Endothelial cell of umbilical vein (primary cell): ENCODE measurements at regions of chr1 and their contacts with region 1.

Region 1: GRCh38 chr1:150813058-150813707 is 5.1 kb upstream of the CTSK start:
- DNase-seq: peak; percentile 83
- H3K4me3 ChIP-seq: no peak overlapping the region
- H3K27ac ChIP-seq: no peak overlapping the region
- H3K4me1 ChIP-seq: peaks cover 2% of the 10 kb centered on the region
- H3K27me3 ChIP-seq: no peaks in the 10 kb centered on the region
- CTCF ChIP-seq: peak; percentile 76 to 81
- POLR2A ChIP-seq: no peak

Region 2: GRCh38 chr1:150621497-150622302 is 191.5 kb before region 1 on chr1:
- CTCF ChIA-PET with region 1: interaction called, 45 read pairs
- POLR2A ChIA-PET with region 1: no interaction called
- dilution Hi-C with region 1: no loop called
- intact Hi-C with region 1: loop called (anchors 1 kb)
- DNase-seq: peak; percentile 73
- H3K4me3 ChIP-seq: no peak overlapping the region
- H3K27ac ChIP-seq: peak overlapping the region; percentile 27
- H3K4me1 ChIP-seq: peaks cover 30% of the 10 kb centered on the region
- H3K27me3 ChIP-seq: no peaks in the 10 kb centered on the region
- CTCF ChIP-seq: peak; percentile 65 to 66
- POLR2A ChIP-seq: no peak

Region 3: DNA sequence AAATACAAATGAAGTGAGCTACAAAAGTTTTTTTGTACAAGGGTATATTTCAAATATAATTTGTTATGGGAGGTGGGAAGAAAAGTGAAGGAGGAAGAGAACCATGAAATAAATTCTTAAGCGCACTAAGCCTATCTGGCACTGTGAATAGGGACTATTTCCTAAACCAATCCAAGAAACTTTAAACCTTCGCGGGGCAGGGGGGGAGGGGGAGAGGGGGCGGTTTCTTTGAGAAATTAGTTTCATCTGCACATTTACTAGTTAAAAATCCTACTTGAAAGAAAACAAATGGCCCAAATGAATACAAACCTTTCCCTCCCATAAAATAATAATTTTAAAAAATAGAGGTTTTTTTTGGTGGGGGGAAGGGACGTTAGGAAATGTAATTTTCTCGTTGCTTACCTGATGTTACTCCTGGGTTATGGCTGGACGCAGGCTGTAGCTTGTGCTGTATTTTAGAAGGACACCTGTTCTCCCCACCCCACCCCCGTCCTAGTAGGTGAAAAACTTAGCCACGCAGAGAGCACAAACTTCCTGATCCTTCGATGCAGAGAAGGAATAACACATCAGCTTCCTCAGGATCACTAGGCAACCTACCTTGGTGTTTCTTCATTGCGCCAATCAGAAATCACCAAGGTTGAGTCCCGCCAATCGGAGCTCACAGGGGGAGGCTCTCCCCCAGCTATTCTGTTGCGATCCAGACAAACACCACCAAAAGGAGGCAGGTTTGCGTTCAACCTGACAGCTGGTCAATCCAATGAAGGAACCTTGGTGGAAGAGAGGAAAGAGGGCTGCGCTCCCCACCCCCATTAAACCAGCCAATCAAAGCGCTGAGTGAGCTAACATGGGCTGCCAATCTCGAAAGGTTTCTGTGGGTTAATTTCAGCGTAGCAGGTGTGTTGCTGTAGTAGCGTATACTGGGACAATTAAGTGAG is 116.3 kb before region 1 on chr1 and contains the start of gene GOLPH3L:
- CTCF ChIA-PET with region 1: interaction called, 21 read pairs
- POLR2A ChIA-PET with region 1: no interaction called
- dilution Hi-C with region 1: no loop called
- intact Hi-C with region 1: loop called (anchors 1 kb)
- DNase-seq: peak; percentile 100
- H3K4me3 ChIP-seq: peak within 1 kb of the TSS; percentile 72 to 96 (median 87)
- H3K27ac ChIP-seq: peak within 1 kb of the TSS; percentile 57
- H3K4me1 ChIP-seq: peaks cover 32% of the 10 kb centered on the region
- H3K27me3 ChIP-seq: no peaks in the 10 kb centered on the region
- CTCF ChIP-seq: peak in 1 of 2 donors; percentile 15
- POLR2A ChIP-seq: peak; percentile 73
- total RNA-seq, gene GOLPH3L: 33.2 and 34.9 TPM in 2 replicates

Region 4: DNA sequence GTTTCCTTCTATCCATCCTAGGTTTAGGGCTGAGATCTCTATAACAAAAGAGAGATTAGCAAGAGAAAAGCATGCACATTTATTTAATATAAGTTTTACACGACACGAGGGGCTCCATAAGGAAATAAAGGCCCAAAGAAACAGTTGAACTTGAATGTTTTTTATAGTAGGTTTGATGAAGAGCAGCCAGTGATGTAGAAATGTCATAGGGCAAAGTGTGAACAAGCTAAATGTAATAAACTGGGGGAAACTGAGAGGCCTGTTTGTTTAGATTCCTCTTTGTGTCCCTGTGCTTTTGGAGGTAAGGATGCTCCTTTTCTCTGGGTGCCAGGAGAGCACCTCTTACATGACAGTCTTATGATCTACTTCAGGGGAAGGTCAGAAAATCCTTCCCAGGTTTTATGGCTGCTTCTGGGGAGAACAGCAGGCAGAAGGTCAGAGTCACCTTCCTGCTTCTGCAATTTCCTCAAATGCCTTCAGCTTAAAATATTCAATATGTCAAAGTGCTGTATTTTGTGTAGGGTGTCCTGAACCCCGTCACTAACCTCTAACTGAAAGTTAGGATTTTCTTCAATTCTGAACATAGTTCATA is 83.0 kb before region 1 on chr1:
- CTCF ChIA-PET with region 1: interaction called, 10 read pairs
- POLR2A ChIA-PET with region 1: no interaction called
- dilution Hi-C with region 1: no loop called
- intact Hi-C with region 1: no loop called
- DNase-seq: no peak
- H3K4me3 ChIP-seq: no peak overlapping the region
- H3K27ac ChIP-seq: no peak overlapping the region
- H3K4me1 ChIP-seq: no peaks in the 10 kb centered on the region
- H3K27me3 ChIP-seq: no peaks in the 10 kb centered on the region
- CTCF ChIP-seq: no peak
- POLR2A ChIP-seq: no peak

Region 5: GRCh38 chr1:150765296-150765976 is 47.7 kb before region 1 on chr1 and contains the start of gene CTSS:
- CTCF ChIA-PET with region 1: interaction called, 8 read pairs
- POLR2A ChIA-PET with region 1: no interaction called
- dilution Hi-C with region 1: no loop called
- intact Hi-C with region 1: loop called (anchors 1 kb)
- DNase-seq: peak; percentile 58
- H3K4me3 ChIP-seq: peak within 1 kb of the TSS in 1 of 3 experiments; percentile 6
- H3K27ac ChIP-seq: peak within 1 kb of the TSS; percentile 80
- H3K4me1 ChIP-seq: peaks cover 23% of the 10 kb centered on the region
- H3K27me3 ChIP-seq: no peaks in the 10 kb centered on the region
- CTCF ChIP-seq: no peak
- POLR2A ChIP-seq: no peak
- total RNA-seq, gene CTSS: 5.7 and 11.1 TPM in 2 replicates